Naive thymus-derived CD4-positive, alpha-beta T cell (primary cell): ENCODE measurements at regions of chr1 and their contacts with region 1.

Region 1: DNA sequence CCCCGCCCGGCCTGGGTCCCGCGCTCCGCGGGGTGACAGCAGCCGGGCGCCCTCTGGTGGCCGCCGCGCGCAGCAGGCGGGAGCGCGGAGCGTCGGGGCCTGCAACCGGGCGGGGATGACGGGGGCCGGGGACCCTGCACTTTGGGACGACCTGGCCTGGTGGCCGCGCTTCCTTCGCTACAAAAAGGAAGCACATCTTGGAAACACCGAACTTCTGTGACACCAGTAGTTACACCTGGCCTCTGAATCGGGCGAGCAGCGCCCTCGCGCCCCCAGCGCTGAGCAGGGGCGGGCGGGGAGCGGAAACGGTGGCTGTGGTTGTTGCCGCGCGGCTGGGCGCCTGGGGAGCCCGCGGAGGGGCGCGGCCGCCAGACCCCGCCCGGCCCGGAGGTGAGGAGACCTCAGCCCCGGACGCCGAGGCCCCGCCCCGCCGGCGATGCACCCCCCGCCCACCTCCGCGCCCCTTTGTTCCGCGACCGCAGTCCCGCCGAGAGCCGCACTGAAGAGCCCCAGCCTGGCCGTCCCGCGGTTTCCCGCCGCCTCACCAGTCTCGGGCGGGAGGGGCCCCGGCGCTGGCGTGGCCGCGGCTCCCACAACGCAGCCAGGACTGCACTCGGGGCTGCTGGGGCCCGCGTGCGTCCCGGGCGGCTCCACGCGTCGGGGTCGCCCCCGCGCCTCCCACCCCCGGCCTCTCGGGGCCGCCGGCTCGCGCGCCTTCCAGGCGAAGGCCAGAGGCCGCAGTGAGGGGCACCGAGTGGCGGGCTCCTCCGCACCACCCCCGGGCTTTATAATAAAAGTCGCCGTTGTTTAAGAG is 59.3 kb downstream of the H3-3A start:
- DNase-seq: peak; percentile 65 to 87 (median 77)
- ATAC-seq: peak; percentile 82
- H3K4me3 ChIP-seq: peak overlapping the region; percentile 28
- H3K4me3 Mint-ChIP-seq: peak overlapping the region; percentile 68 to 94 (median 82)
- H3K27ac ChIP-seq: peak overlapping the region; percentile 75
- H3K27ac Mint-ChIP-seq: peak overlapping the region in 4 of 9 donors; percentile 51 to 95 (median 77)
- H3K4me1 ChIP-seq: peaks cover 9 to 12% of the 10 kb centered on the region in 2 donors
- H3K4me1 Mint-ChIP-seq: peaks cover 15 to 40% (median 27%) of the 10 kb centered on the region in 7 donors
- H3K27me3 ChIP-seq: no peaks in the 10 kb centered on the region
- H3K27me3 Mint-ChIP-seq: peaks cover 0 to 10% (median 0%) of the 10 kb centered on the region in 5 donors

Region 2: DNA sequence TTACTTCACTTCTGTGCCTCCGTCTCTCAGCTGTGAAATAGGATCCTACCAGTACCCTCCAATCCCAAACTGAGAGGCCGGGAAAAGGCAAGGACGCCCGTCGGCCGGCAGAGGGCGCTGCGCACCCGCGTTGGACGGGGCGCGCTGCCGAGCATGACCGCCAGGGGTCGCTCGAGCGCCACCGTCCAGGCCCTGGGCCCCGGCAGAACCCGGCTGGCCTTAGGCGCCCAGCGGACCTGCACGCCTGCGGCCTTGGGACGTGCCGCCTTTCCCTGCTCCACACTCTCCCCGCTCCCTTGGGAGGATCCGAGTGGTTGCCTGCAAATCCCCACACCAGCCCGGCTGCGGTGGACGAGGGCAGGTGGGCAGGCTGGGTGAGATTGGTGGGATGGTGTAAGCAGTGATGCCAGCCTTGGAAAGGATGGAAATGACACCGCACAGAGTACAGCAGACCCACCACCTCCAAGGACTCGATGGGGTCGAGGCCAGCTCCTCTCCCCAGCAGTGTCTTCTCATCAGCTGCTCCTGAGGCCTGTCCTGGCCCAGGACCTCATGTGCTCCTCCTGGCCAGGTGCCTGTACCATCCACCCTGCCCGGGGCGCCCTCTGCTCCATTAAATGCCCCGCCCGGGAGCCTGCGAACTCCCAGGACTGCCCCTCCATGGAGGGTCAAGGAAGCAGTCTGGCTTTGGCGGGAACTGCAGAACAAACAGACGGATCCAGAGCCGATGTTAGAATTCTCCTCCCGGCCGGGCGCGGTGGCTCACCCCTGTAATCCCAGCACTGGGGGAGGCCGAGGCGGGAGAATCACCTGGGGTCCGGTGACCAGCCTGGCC is 646.6 kb before region 1 on chr1:
- CTCF ChIA-PET with region 1: no interaction called
- POLR2A ChIA-PET with region 1: interaction called, 3 read pairs
- intact Hi-C with region 1: loop called in 1 of 2 experiments (anchors 1 kb)
- DNase-seq: peak; percentile 36 to 88 (median 68)
- ATAC-seq: peak; percentile 96
- H3K4me3 ChIP-seq: no peak overlapping the region
- H3K4me3 Mint-ChIP-seq: peak overlapping the region in 5 of 10 donors; percentile 38 to 59 (median 56)
- H3K27ac ChIP-seq: no peak overlapping the region
- H3K27ac Mint-ChIP-seq: peak overlapping the region in 2 of 9 donors; percentile 38 to 87
- H3K4me1 ChIP-seq: peaks cover 11 to 37% of the 10 kb centered on the region in 2 donors
- H3K4me1 Mint-ChIP-seq: peaks cover 36 to 61% (median 52%) of the 10 kb centered on the region in 7 donors
- H3K27me3 ChIP-seq: no peaks in the 10 kb centered on the region
- H3K27me3 Mint-ChIP-seq: peaks cover 0 to 5% (median 0%) of the 10 kb centered on the region in 5 donors

Region 3: GRCh38 chr1:225987491-225988316 is 134.1 kb before region 1 on chr1:
- CTCF ChIA-PET with region 1: interaction called, 3 read pairs
- POLR2A ChIA-PET with region 1: interaction called, 3 read pairs
- intact Hi-C with region 1: loop called in 1 of 2 experiments (anchors 2 kb)
- DNase-seq: peak in 5 of 9 donors; percentile 41 to 54 (median 49)
- ATAC-seq: peak; percentile 80
- H3K4me3 ChIP-seq: no peak overlapping the region
- H3K4me3 Mint-ChIP-seq: peak overlapping the region in 1 of 10 donors; percentile 12
- H3K27ac ChIP-seq: no peak overlapping the region
- H3K27ac Mint-ChIP-seq: peak overlapping the region in 6 of 9 donors; percentile 1 to 55 (median 23)
- H3K4me1 ChIP-seq: peaks cover 0 to 10% of the 10 kb centered on the region in 2 donors
- H3K4me1 Mint-ChIP-seq: peaks cover 11 to 35% (median 24%) of the 10 kb centered on the region in 7 donors
- H3K27me3 ChIP-seq: no peaks in the 10 kb centered on the region
- H3K27me3 Mint-ChIP-seq: no peaks in the 10 kb centered on the region

Region 4: GRCh38 chr1:226186124-226187018 is 64.6 kb after region 1 on chr1 and contains the start of gene ACBD3:
- CTCF ChIA-PET with region 1: interaction called, 8 read pairs
- POLR2A ChIA-PET with region 1: interaction called, 4 read pairs
- intact Hi-C with region 1: loop called (anchors 1 to 2 kb)
- DNase-seq: peak; percentile 66 to 87 (median 83)
- ATAC-seq: peak; percentile 96
- H3K4me3 ChIP-seq: peak within 1 kb of the TSS; percentile 97
- H3K4me3 Mint-ChIP-seq: peak within 1 kb of the TSS; percentile 91 to 99 (median 94)
- H3K27ac ChIP-seq: peak within 1 kb of the TSS; percentile 84
- H3K27ac Mint-ChIP-seq: peak within 1 kb of the TSS; percentile 88 to 98 (median 94)
- H3K4me1 ChIP-seq: peaks cover 23 to 30% of the 10 kb centered on the region in 2 donors
- H3K4me1 Mint-ChIP-seq: peaks cover 28 to 44% (median 36%) of the 10 kb centered on the region in 7 donors
- H3K27me3 ChIP-seq: no peaks in the 10 kb centered on the region
- H3K27me3 Mint-ChIP-seq: no peaks in the 10 kb centered on the region
- total RNA-seq, gene ACBD3: 19.6 to 29.9 (median 26.1) TPM

Region 5: DNA sequence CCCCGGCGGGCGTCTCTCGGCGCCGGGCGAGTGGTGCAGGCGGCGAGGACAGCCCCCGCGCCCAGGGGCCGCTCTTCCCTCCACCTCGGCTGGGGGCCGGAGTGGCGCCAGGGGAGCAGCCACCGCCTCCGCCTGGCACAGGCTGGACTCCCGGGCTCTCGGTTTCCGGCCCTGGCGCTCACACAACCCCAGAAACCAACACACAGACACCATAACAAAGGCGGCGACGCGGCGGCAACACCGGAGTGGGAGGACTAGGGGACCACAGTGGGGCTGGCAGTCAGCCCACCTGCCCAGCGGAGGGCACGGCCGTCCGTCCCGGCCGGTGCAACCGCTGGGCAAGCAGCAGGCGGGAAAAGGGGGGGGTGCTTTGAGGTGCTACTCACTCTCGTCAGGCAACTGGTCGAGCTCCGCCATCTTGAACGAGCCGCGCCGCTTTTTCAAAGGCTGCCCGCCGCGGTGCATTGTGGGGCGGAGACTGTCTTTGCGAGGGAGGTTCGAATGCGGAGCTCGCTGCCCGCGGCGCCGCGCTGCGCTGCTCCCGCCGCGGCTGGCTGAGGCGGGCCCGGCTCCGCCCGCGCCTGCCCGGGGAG is 187.0 kb after region 1 on chr1 and contains the start of gene LIN9:
- CTCF ChIA-PET with region 1: interaction called, 3 read pairs
- POLR2A ChIA-PET with region 1: interaction called, 4 read pairs
- intact Hi-C with region 1: loop called in 1 of 2 experiments (anchors 2 kb)
- DNase-seq: peak; percentile 83 to 94 (median 88)
- ATAC-seq: peak; percentile 97
- H3K4me3 ChIP-seq: peak within 1 kb of the TSS; percentile 99
- H3K4me3 Mint-ChIP-seq: peak within 1 kb of the TSS; percentile 88 to 95 (median 92)
- H3K27ac ChIP-seq: peak within 1 kb of the TSS; percentile 76
- H3K27ac Mint-ChIP-seq: peak within 1 kb of the TSS; percentile 34 to 97 (median 85)
- H3K4me1 ChIP-seq: peaks cover 5% of the 10 kb centered on the region in 2 donors
- H3K4me1 Mint-ChIP-seq: peaks cover 14 to 37% (median 22%) of the 10 kb centered on the region in 7 donors
- H3K27me3 ChIP-seq: peaks cover 0 to 4% of the 10 kb centered on the region in 2 donors
- H3K27me3 Mint-ChIP-seq: peaks cover 5 to 19% (median 14%) of the 10 kb centered on the region in 5 donors
- total RNA-seq, gene LIN9: 2.0 to 8.0 (median 5.0) TPM

Region 6: GRCh38 chr1:226608699-226609505 is 487.1 kb after region 1 on chr1:
- CTCF ChIA-PET with region 1: interaction called, 5 read pairs
- POLR2A ChIA-PET with region 1: no interaction called
- intact Hi-C with region 1: loop called in 1 of 2 experiments (anchors 10 kb)
- DNase-seq: peak; percentile 44 to 75 (median 62)
- ATAC-seq: peak; percentile 84
- H3K4me3 ChIP-seq: no peak overlapping the region
- H3K4me3 Mint-ChIP-seq: no peak overlapping the region
- H3K27ac ChIP-seq: no peak overlapping the region
- H3K27ac Mint-ChIP-seq: peak overlapping the region in 1 of 9 donors; percentile 21
- H3K4me1 ChIP-seq: no peaks in the 10 kb centered on the region
- H3K4me1 Mint-ChIP-seq: peaks cover 0 to 3% (median 0%) of the 10 kb centered on the region in 7 donors
- H3K27me3 ChIP-seq: no peaks in the 10 kb centered on the region
- H3K27me3 Mint-ChIP-seq: peaks cover 0 to 6% (median 0%) of the 10 kb centered on the region in 5 donors